Testis (tissue), 5 donors: ENCODE measurements at regions of chr7 and their contacts with region 1.

Region 1: GRCh38 chr7:155344600-155345433 is 47.1 kb downstream of the INSIG1 start:
- DNase-seq: peak; percentile 86
- H3K4me3 ChIP-seq: peak overlapping the region; percentile 29 to 33
- H3K27ac ChIP-seq: no peak overlapping the region
- H3K4me1 ChIP-seq: peaks cover 3% of the 10 kb centered on the region
- H3K27me3 ChIP-seq: no peaks in the 10 kb centered on the region
- CTCF ChIP-seq: peak; percentile 95 to 98 (median 98)
- POLR2A ChIP-seq: no peak

Region 2: DNA sequence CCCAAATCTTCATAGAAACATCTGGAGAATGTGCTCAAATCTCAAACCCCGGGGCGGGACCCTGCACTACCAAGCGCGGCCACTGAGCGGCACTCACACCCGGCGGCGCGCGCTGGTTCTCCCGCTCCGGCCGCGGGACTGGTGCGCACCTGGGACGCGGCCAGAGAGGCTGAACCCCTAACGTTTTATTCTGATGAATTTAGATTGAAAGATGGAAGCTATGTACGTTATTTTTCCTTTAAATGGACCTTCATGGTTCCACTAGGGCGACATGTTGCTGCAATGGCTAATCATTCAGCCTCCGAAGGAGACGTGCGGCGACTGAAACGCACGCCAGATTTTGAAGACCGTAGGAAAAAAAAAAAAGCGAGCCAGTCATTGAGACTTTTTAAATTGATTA is 154.1 kb before region 1 on chr7:
- intact Hi-C with region 1: loop called (anchors 5 kb)
- DNase-seq: peak; percentile 73
- H3K4me3 ChIP-seq: no peak overlapping the region
- H3K27ac ChIP-seq: no peak overlapping the region
- H3K4me1 ChIP-seq: no peaks in the 10 kb centered on the region
- H3K27me3 ChIP-seq: no peaks in the 10 kb centered on the region
- CTCF ChIP-seq: peak; percentile 87 to 93 (median 93)
- POLR2A ChIP-seq: no peak